ENCODE measurements at regions of chr14 and their contacts with region 1.

Region 1: GRCh38 chr14:36941783-36942521 is 230.5 kb downstream of the SLC25A21 start:
- DNase-seq: peak; percentile 72
- H3K4me3 ChIP-seq: no peak overlapping the region
- H3K27ac ChIP-seq: no peak overlapping the region
- H3K4me1 ChIP-seq: no peaks in the 10 kb centered on the region
- H3K27me3 ChIP-seq: peaks cover 24% of the 10 kb centered on the region
- CTCF ChIP-seq: peak; percentile 85 to 96 (median 88)
- EP300 ChIP-seq: no peak
- POLR2A ChIP-seq: no peak

Region 2: DNA sequence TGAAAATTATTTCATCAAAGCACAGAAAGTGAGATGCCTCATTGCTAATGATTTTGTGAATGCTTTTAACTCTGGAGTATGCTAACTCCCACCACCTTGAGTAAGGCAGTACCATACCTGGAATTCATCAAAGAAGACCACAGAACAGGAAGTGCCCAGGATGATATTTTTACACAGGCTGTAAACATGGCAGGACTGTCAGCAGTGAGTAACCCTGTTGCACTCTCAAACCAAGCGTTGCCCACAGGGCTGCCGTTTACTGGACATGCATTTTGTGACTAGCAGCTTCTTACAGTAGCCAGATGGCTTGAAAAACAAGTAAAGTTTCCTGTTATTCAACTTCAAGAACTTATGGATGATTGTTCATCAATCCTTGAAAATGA is 1175.3 kb before region 1 on chr14:
- in situ Hi-C with region 1: no loop called
- intact Hi-C with region 1: no loop called
- DNase-seq: no peak
- H3K4me3 ChIP-seq: no peak overlapping the region
- H3K27ac ChIP-seq: no peak overlapping the region
- H3K4me1 ChIP-seq: no peaks in the 10 kb centered on the region
- H3K27me3 ChIP-seq: no peaks in the 10 kb centered on the region
- CTCF ChIP-seq: no peak
- EP300 ChIP-seq: no peak
- POLR2A ChIP-seq: no peak

Region 3: DNA sequence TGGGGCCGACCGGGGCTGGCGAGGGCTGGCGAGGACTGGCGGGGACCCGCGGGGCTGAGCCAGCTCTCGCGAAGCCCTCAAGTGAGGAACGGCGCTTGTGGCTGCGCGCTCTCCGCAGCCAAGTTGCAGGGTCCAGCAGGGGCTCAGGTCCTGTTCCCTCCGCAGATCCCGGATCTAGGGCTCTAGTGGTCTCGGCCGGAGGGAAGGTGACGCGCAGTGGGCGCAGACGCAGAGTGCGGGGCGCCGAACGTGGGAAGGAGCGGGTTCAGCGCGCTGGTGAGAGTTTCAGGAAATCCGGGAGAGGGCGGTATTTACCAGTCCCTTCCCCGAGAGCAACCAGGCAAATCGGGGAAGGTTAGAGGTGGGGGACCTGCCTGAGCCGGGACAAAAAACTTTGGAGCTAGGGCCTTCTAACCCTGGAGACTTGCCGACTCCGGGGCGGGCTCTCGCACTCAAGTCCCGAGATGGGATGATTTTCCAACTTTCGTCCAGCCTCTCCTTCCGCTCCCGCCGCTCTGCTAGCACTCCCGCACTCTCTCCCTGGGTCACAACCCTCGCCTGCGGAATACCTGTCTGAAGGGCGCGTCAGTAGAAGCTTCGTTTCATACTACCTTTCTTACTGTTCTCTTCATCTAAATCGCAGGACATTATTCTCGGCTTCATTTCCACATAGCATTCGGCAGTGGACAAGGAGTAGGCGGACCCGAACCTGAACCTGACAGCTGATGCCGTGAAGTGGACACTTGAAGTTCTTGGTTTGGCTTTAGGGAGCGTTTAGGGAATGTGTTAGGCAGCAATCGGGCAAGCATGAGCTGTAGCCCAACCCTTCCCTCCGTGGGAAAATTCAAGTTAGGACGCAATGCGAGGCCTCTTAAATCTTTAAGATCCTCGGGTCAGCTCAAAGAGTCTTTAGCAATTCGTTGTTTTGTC is 293.9 kb before region 1 on chr14:
- in situ Hi-C with region 1: loop called in 3 of 4 experiments (anchors 10 to 25 kb)
- intact Hi-C with region 1: no loop called
- DNase-seq: no peak
- H3K4me3 ChIP-seq: peak overlapping the region in 3 of 4 donors; percentile 20 to 49 (median 42)
- H3K27ac ChIP-seq: no peak overlapping the region
- H3K4me1 ChIP-seq: peaks cover 9 to 19% (median 17%) of the 10 kb centered on the region in 4 donors
- H3K27me3 ChIP-seq: peaks cover 98% of the 10 kb centered on the region
- CTCF ChIP-seq: peak; percentile 42 to 56 (median 50)
- EP300 ChIP-seq: no peak
- POLR2A ChIP-seq: no peak

Region 4: GRCh38 chr14:36661756-36662498 is 280.0 kb before region 1 on chr14 and contains the start of gene PAX9:
- in situ Hi-C with region 1: loop called in 1 of 4 experiments (anchors 25 kb)
- intact Hi-C with region 1: no loop called
- DNase-seq: peak; percentile 86
- H3K4me3 ChIP-seq: peak within 1 kb of the TSS in 3 of 4 donors; percentile 29 to 54 (median 31)
- H3K27ac ChIP-seq: no peak within 1 kb of the TSS
- H3K4me1 ChIP-seq: peaks cover 21 to 64% (median 48%) of the 10 kb centered on the region in 4 donors
- H3K27me3 ChIP-seq: peaks cover 100% of the 10 kb centered on the region
- CTCF ChIP-seq: no peak
- EP300 ChIP-seq: no peak
- POLR2A ChIP-seq: no peak
- total RNA-seq, gene PAX9: 0.79 TPM in 1 of 4 donors, not detected in the others

Region 5: GRCh38 chr14:36690301-36691033 is 251.5 kb before region 1 on chr14:
- in situ Hi-C with region 1: no loop called
- intact Hi-C with region 1: no loop called
- DNase-seq: no peak
- H3K4me3 ChIP-seq: no peak overlapping the region
- H3K27ac ChIP-seq: no peak overlapping the region
- H3K4me1 ChIP-seq: no peaks in the 10 kb centered on the region
- H3K27me3 ChIP-seq: no peaks in the 10 kb centered on the region
- CTCF ChIP-seq: no peak
- EP300 ChIP-seq: no peak
- POLR2A ChIP-seq: no peak

Region 6: GRCh38 chr14:36805131-36805559 is 136.8 kb before region 1 on chr14:
- in situ Hi-C with region 1: no loop called
- intact Hi-C with region 1: no loop called
- DNase-seq: no peak
- H3K4me3 ChIP-seq: no peak overlapping the region
- H3K27ac ChIP-seq: no peak overlapping the region
- H3K4me1 ChIP-seq: no peaks in the 10 kb centered on the region
- H3K27me3 ChIP-seq: no peaks in the 10 kb centered on the region
- CTCF ChIP-seq: no peak
- EP300 ChIP-seq: no peak
- POLR2A ChIP-seq: no peak